Heart left ventricle (tissue), 16 donors: ENCODE measurements at regions of chr15 and their contacts with region 1.

Region 1: DNA sequence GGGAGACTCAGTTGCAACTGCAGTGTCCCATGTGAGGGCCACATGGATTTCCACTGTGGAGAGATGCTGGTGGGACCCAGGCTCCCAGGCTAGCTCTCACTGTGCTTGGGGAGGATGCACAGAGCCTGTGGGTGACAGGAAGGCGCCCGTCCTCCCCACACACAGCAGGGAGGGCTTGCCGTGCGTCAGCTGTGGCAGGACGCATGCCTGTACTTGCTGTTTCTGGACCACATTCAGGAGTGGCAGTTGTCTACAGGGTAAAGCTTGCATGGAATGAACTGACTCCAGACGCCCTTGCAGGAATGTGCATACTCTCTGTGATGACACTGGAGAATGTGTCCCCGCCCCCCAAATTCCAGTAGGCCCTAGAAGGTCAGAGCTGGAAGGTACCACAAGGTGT is 63.8 kb upstream of the SNRPA1 start:
- DNase-seq: peak in 3 of 5 donors; percentile 58 to 77 (median 71)
- ATAC-seq: peak; percentile 79 to 86 (median 82)
- H3K4me3 ChIP-seq: no peak overlapping the region
- H3K27ac ChIP-seq: peak overlapping the region in 7 of 12 donors; percentile 16 to 76 (median 60)
- H3K4me1 ChIP-seq: peaks cover 0 to 27% (median 7%) of the 10 kb centered on the region in 12 donors
- H3K27me3 ChIP-seq: no peaks in the 10 kb centered on the region
- CTCF ChIP-seq: no peak
- POLR2A ChIP-seq: no peak

Region 2: GRCh38 chr15:101413239-101413638 is 54.3 kb after region 1 on chr15:
- intact Hi-C with region 1: no loop called
- DNase-seq: no peak
- ATAC-seq: no peak
- H3K4me3 ChIP-seq: no peak overlapping the region
- H3K27ac ChIP-seq: no peak overlapping the region
- H3K4me1 ChIP-seq: no peaks in the 10 kb centered on the region
- H3K27me3 ChIP-seq: no peaks in the 10 kb centered on the region
- CTCF ChIP-seq: peak in 2 of 12 donors; percentile 37 to 38
- POLR2A ChIP-seq: no peak

Region 3: DNA sequence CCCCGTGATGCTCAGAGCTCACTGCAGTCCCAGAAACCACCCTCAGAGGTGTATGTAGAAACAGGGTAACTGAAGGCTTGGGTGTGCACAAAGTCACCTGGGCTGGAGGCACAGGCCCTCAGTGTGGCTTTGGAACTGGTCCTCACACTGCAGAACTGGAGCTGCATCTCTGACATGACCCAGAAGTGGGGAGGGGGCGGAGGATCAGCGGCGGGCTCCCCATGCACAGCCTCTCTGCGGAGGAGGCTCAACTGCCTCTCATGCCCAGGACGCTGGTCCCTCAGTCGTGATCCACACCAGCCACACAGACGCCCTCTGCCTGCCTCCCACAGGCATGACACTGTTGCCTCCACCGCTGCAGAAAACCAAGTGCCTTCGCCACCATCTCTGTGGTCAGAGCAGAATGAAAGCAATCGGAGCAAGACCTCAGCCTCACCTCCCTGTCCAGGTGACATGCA is 219.6 kb after region 1 on chr15:
- intact Hi-C with region 1: loop called in 1 of 10 experiments (anchors 5 kb)
- DNase-seq: peak in 4 of 5 donors; percentile 41 to 70 (median 54)
- ATAC-seq: peak; percentile 35 to 56 (median 52)
- H3K4me3 ChIP-seq: no peak overlapping the region
- H3K27ac ChIP-seq: no peak overlapping the region
- H3K4me1 ChIP-seq: peaks cover 0 to 7% (median 0%) of the 10 kb centered on the region in 12 donors
- H3K27me3 ChIP-seq: peaks cover 0 to 4% (median 0%) of the 10 kb centered on the region in 9 donors
- CTCF ChIP-seq: peak; percentile 18 to 56 (median 50)
- POLR2A ChIP-seq: no peak